ENCODE measurements at regions of chr1 and their contacts with region 1.

Region 1: DNA sequence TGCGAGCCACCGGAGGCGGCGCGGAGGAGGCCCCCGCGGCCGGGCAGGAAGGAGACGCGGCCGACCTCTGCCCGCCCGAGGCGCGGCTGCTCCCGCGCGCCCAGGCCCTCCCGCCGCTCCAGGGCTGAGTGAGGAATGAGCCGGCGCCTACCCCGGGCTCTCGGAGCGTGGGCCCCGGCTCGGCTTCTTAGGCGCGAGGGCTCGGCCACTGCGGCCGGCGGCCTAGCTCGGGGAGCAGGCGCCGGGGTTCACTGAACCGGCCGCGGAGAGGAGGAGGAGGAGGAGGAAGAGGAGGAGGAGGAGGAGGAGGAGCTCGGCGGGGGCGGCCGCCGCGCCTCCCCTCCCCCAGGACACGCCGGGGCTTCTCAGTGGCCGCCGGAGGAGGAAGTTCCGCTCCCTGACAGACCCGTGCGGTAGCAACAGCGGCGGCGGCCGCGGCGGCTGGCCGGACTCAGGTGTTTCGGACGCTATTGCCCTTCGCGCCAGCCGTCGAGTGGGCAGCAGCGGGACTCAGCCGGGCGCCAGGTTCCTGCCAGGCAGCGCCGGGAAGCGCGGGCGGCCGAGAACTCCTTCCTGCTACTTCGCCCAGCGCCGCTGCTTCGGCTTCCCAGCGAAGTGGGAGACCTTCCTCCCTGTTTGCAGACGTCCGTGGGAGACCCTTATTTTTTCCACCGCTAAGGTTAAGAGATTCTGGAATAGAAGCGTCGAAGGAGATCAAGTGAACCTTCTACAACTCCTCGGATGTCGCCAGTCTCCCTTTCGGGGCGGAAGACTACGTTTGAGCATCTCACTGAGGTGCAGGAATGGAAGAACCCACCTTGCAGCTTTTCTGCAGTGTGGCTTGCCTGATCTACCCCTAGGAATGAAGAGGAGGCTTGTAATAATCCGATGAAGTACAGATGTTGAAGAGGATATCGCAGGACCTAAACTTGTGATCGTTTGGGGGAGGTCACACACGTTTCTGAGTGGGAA is at the start of gene MAN1A2:
- DNase-seq: peak; percentile 82
- ATAC-seq: peak; percentile 72
- H3K4me3 Mint-ChIP-seq: peak within 1 kb of the TSS; percentile 95
- H3K27ac Mint-ChIP-seq: peak within 1 kb of the TSS; percentile 91
- H3K4me1 Mint-ChIP-seq: peaks cover 68% of the 10 kb centered on the region
- H3K27me3 Mint-ChIP-seq: no peaks in the 10 kb centered on the region
- CTCF ChIP-seq: no peak
- total RNA-seq, gene MAN1A2: 43.3 and 46.0 TPM in 2 replicates

Region 2: GRCh38 chr1:115976062-115976920 is 1391.0 kb before region 1 on chr1 and contains the start of gene SLC22A15:
- CTCF ChIA-PET with region 1: no interaction called
- POLR2A ChIA-PET with region 1: no interaction called
- intact Hi-C with region 1: loop called (anchors 5 kb)
- DNase-seq: peak; percentile 63
- ATAC-seq: peak; percentile 90
- H3K4me3 Mint-ChIP-seq: peak within 1 kb of the TSS; percentile 82
- H3K27ac Mint-ChIP-seq: peak within 1 kb of the TSS; percentile 71
- H3K4me1 Mint-ChIP-seq: peaks cover 16% of the 10 kb centered on the region
- H3K27me3 Mint-ChIP-seq: peaks cover 3% of the 10 kb centered on the region
- CTCF ChIP-seq: no peak
- total RNA-seq, gene SLC22A15: 4.1 and 4.6 TPM in 2 replicates

Region 3: GRCh38 chr1:116737020-116737854 is 630.1 kb before region 1 on chr1:
- CTCF ChIA-PET with region 1: no interaction called
- POLR2A ChIA-PET with region 1: no interaction called
- intact Hi-C with region 1: loop called (anchors 5 kb)
- DNase-seq: peak; percentile 34
- ATAC-seq: peak; percentile 70
- H3K4me3 Mint-ChIP-seq: peak overlapping the region; percentile 45
- H3K27ac Mint-ChIP-seq: peak overlapping the region; percentile 4
- H3K4me1 Mint-ChIP-seq: peaks cover 25% of the 10 kb centered on the region
- H3K27me3 Mint-ChIP-seq: no peaks in the 10 kb centered on the region
- CTCF ChIP-seq: peak; percentile 45

Region 4: GRCh38 chr1:116990612-116991151 is 376.7 kb before region 1 on chr1:
- CTCF ChIA-PET with region 1: no interaction called
- POLR2A ChIA-PET with region 1: no interaction called
- intact Hi-C with region 1: no loop called
- DNase-seq: no peak
- ATAC-seq: no peak
- H3K4me3 Mint-ChIP-seq: no peak overlapping the region
- H3K27ac Mint-ChIP-seq: no peak overlapping the region
- H3K4me1 Mint-ChIP-seq: no peaks in the 10 kb centered on the region
- H3K27me3 Mint-ChIP-seq: peaks cover 10% of the 10 kb centered on the region
- CTCF ChIP-seq: no peak

Region 5: DNA sequence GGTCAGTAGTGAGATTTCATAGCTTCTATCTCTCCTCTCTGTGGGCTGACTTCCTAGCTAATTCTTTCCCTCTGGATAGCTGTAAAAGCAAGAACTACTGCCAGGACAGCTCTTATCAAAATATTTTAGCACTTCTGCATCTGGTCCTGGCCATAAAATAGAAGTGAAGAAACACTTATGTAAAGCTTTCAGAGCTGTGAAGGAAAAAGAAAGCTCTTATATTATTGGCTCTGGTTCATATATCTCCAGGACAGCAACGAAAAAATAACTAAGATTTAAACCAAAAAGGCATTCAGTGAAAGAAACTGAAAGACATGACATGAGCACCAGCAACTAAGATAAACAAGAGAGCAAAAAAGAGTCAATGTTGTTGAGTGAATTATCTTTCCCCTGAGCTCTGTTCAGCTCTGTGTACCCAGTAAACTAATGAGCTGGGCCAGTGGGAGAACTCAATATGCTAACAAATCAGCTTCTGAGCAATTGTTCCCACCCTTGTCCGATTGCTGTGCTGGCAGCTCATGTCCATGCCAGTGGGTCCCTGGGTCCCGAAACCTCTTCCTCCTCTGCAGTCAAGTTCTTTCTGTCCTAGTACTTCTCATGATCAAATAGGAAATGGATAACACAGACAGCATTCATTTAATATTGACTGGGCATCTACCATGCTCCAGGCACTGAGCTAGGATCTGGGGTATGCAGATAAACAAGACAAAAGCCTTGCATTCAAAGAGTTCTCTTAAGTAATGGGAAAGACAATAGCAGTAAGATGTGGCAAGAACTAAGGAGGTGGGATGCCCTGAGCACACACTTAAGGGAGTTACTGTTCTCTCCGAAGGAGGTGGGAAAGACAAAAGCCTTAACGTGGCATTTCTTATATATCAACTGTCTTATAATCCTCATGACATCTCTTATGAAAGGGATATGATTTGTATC is 45.4 kb before region 1 on chr1:
- CTCF ChIA-PET with region 1: no interaction called
- POLR2A ChIA-PET with region 1: no interaction called
- intact Hi-C with region 1: no loop called
- DNase-seq: no peak
- ATAC-seq: no peak
- H3K4me3 Mint-ChIP-seq: no peak overlapping the region
- H3K27ac Mint-ChIP-seq: no peak overlapping the region
- H3K4me1 Mint-ChIP-seq: no peaks in the 10 kb centered on the region
- H3K27me3 Mint-ChIP-seq: peaks cover 24% of the 10 kb centered on the region
- CTCF ChIP-seq: no peak

Region 6: GRCh38 chr1:117339866-117340700 is 27.2 kb before region 1 on chr1:
- CTCF ChIA-PET with region 1: interaction called, 3 read pairs
- POLR2A ChIA-PET with region 1: interaction called, 10 read pairs
- intact Hi-C with region 1: no loop called
- DNase-seq: no peak
- ATAC-seq: peak; percentile 31
- H3K4me3 Mint-ChIP-seq: no peak overlapping the region
- H3K27ac Mint-ChIP-seq: no peak overlapping the region
- H3K4me1 Mint-ChIP-seq: peaks cover 7% of the 10 kb centered on the region
- H3K27me3 Mint-ChIP-seq: peaks cover 2% of the 10 kb centered on the region
- CTCF ChIP-seq: no peak

Region 7: GRCh38 chr1:117392771-117393170 is 25.4 kb after region 1 on chr1:
- CTCF ChIA-PET with region 1: no interaction called
- POLR2A ChIA-PET with region 1: no interaction called
- intact Hi-C with region 1: no loop called
- DNase-seq: no peak
- ATAC-seq: no peak
- H3K4me3 Mint-ChIP-seq: no peak overlapping the region
- H3K27ac Mint-ChIP-seq: no peak overlapping the region
- H3K4me1 Mint-ChIP-seq: peaks cover 61% of the 10 kb centered on the region
- H3K27me3 Mint-ChIP-seq: no peaks in the 10 kb centered on the region
- CTCF ChIP-seq: no peak

Region 8: GRCh38 chr1:117414943-117415342 is 47.6 kb after region 1 on chr1:
- CTCF ChIA-PET with region 1: no interaction called
- POLR2A ChIA-PET with region 1: no interaction called
- intact Hi-C with region 1: no loop called
- DNase-seq: no peak
- ATAC-seq: no peak
- H3K4me3 Mint-ChIP-seq: no peak overlapping the region
- H3K27ac Mint-ChIP-seq: no peak overlapping the region
- H3K4me1 Mint-ChIP-seq: no peaks in the 10 kb centered on the region
- H3K27me3 Mint-ChIP-seq: no peaks in the 10 kb centered on the region
- CTCF ChIP-seq: no peak

Region 9: GRCh38 chr1:117664314-117664713 is 297.0 kb after region 1 on chr1:
- CTCF ChIA-PET with region 1: no interaction called
- POLR2A ChIA-PET with region 1: interaction called, 8 read pairs
- intact Hi-C with region 1: loop called (anchors 2 kb)
- DNase-seq: no peak
- ATAC-seq: peak; percentile 87
- H3K4me3 Mint-ChIP-seq: peak overlapping the region; percentile 44
- H3K27ac Mint-ChIP-seq: peak overlapping the region; percentile 93
- H3K4me1 Mint-ChIP-seq: peaks cover 83% of the 10 kb centered on the region
- H3K27me3 Mint-ChIP-seq: no peaks in the 10 kb centered on the region
- CTCF ChIP-seq: no peak

Region 10: DNA sequence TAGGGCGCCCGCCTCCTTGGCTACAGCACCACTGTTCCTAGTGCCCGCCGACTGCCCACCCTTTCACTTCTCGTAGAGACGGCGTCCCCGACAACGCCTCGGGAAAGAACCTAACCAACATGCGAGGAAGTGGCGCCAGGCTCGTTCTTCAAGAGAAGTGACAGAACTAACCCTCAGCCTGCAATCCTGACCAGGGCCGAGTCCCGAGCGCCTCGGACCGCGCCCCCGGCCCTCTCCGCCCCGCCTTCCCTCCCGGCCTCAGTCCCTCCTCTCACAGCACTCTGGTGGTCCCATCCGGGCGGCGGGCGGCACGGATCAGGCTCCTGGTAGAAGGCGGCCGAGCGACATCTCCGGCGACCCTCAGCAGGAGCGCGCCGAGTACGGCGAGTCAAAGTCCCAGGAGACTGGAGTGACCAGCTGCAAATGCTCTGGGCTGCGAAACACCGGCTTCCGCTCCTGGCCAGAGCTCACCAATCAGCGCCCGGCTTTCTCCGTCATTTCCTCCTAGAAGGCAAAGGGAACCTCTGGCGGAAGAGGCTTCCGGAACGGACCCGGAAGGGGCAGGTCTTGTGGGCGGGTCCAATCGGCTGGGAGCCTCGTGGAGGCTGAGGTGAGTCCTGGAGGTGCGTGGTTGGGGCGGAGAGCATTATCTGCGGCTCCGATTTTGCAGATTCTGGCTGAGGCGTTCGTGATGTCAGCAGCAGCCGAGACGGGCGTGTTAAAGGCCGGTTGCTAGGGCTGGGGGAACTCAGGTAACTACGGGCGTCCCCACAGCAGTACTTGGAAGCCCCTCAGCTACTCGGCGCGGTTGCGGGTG is 562.0 kb after region 1 on chr1 and contains the starts of genes GDAP2 and WDR3:
- CTCF ChIA-PET with region 1: no interaction called
- POLR2A ChIA-PET with region 1: interaction called, 7 read pairs
- intact Hi-C with region 1: loop called (anchors 2 kb)
- DNase-seq: peak; percentile 84
- ATAC-seq: peak; percentile 91
- H3K4me3 Mint-ChIP-seq: peak within 1 kb of the TSS; percentile 94
- H3K27ac Mint-ChIP-seq: peak within 1 kb of the TSS; percentile 91
- H3K4me1 Mint-ChIP-seq: peaks cover 57% of the 10 kb centered on the region
- H3K27me3 Mint-ChIP-seq: no peaks in the 10 kb centered on the region
- CTCF ChIP-seq: no peak
- total RNA-seq, gene GDAP2: 19.6 and 20.6 TPM in 2 replicates
- total RNA-seq, gene WDR3: 32.7 and 38.0 TPM in 2 replicates

Measured in activated B cell treated with CpG ODN at 0.5 μM for 24 hours (primary cell).